A549 (cell line): ENCODE measurements at regions of chr10 and their contacts with region 1.

Region 1: DNA sequence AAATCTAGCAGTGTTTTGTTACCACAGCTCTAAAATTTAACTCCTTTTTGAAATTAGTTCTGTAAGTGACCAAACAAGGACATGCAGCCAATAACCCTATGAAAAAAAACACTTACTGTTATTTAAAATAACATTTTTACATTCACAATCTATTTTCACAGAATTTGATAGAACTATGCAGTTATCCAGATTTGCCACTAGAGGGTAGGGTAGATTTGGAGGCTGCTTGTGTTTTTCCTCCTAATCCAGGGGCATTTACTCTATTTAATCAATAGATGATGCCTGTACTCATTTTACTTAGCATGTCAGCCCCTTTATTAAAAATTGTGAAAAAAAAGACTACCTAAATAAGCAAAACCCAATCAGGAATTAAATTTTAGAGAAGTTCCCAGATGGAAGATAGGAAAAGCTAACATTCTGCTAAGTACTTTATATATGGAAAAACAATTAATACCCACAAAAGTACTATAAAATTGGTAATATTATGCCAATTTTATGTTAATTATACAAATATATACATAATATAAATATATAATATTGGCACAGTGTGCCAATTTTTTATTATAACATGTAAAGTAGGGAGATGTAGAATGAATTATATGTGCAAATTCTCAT is 18.1 kb upstream of the LIPK start:
- DNase-seq: peak; percentile 27 to 36
- ATAC-seq: no peak
- H3K4me3 ChIP-seq: no peak overlapping the region
- H3K27ac ChIP-seq: peak overlapping the region in 1 of 2 experiments; percentile 37; a peak in 1 of 6 replicates
- H3K4me1 ChIP-seq: peaks cover 23% of the 10 kb centered on the region
- CTCF ChIP-seq: peak; percentile 86
- EP300 ChIP-seq: no peak
- POLR2A ChIP-seq: no peak
- RAD21 ChIP-seq: peak; percentile 79 to 82

Region 2: DNA sequence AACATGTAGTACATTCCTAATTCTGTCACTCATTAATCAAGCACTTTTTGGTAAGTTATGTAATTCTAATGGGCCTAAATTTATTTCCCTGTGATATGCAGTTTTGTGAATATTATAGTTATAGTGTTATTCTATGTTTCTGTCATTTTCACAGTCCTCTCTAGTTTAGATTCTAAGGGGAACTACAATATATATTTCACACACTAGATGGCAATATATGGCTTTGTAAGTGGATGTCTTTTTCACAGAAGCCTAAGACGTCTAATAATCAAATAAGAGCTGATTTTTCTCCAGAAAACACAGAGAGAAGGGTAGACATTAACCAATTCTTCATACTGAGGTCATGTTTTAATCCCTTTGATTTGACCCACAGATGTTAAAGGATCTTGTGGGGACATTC is 122.9 kb before region 1 on chr10:
- CTCF ChIA-PET with region 1: interaction called, 16 read pairs
- POLR2A ChIA-PET with region 1: no interaction called
- DNase-seq: peak; percentile 15 to 39
- ATAC-seq: peak; percentile 81 to 89
- H3K4me3 ChIP-seq: no peak overlapping the region
- H3K27ac ChIP-seq: no peak overlapping the region
- H3K4me1 ChIP-seq: peaks cover 10% of the 10 kb centered on the region; the same call in 2 of the 3 replicates
- CTCF ChIP-seq: peak; percentile 64
- EP300 ChIP-seq: no peak
- POLR2A ChIP-seq: no peak
- RAD21 ChIP-seq: peak; percentile 82 to 85

Region 3: DNA sequence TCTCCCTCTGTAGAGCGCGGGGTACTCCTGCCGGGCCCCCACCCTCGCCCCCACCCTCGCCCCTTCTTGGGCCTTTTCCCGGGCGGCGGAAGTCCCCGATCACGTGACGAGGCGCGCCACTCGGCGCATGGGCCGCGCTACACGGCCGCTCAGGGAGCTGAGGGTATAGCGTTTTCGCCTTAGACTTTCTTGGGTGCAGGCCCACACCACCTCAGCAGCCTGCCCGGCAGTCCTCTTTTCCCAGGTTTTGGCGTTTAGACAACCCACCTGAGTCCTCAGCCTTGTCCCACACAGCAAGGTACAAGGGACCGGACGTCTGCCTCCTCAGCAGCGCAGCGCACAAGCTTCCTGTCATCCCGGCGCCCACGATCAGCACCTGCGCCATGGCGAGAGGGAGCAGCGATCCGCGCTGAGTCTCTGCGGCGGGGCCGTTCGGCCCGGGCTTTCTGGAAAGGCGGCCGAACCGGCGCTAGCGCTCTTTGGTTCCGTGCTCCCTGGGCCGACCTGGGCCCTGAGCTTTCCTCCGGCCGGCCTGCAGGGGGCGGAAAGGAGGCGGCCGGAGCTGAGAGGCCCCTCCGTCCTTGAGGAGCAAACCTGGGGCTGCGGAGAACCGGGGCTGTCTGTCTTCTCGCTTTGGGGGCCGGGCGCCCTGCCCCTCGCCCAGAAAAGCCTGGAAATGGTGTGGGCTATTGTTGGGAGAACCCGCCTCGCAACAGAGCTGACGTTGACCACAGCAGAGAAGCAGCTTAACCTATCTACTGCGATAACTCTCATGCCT is 105.0 kb before region 1 on chr10 and contains the start of gene RNLS:
- CTCF ChIA-PET with region 1: interaction called, 13 read pairs
- POLR2A ChIA-PET with region 1: interaction called, 4 read pairs
- DNase-seq: peak; percentile 21 to 74
- ATAC-seq: peak; percentile 94 to 96
- H3K4me3 ChIP-seq: peak within 1 kb of the TSS; percentile 67
- H3K27ac ChIP-seq: peak within 1 kb of the TSS; percentile 90 to 93
- H3K4me1 ChIP-seq: no peaks in the 10 kb centered on the region
- CTCF ChIP-seq: peak; percentile 61
- EP300 ChIP-seq: no peak
- POLR2A ChIP-seq: peak; percentile 62
- RAD21 ChIP-seq: peak; percentile 26 to 54; a peak in 4 of 5 replicates
- polyA plus RNA-seq, gene RNLS: 16.8 and 20.0 TPM in 2 replicates

Region 4: DNA sequence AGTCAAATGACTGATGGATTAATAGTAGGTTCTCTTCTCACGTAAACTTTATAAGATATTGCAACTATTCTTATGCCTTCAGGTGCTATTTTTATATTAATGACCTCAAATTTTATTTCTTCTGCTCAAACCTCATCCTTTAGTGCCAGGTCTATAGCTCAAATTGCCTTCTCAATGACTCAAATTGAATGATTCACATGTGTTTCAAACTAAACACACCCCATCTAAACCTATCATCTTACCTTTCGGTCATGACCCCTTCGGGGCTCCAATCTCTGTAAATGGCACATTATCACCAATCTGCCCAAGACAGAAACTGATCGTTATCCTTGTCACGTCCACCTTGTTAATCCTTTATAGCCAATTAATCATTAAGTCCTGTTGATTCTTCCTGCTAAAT is 45.7 kb before region 1 on chr10:
- CTCF ChIA-PET with region 1: no interaction called
- POLR2A ChIA-PET with region 1: no interaction called
- DNase-seq: no peak
- ATAC-seq: no peak
- H3K4me3 ChIP-seq: no peak overlapping the region
- H3K27ac ChIP-seq: peak overlapping the region in 1 of 2 experiments; percentile 46; a peak in 2 of 6 replicates
- H3K4me1 ChIP-seq: peaks cover 13% of the 10 kb centered on the region
- CTCF ChIP-seq: no peak
- EP300 ChIP-seq: no peak
- POLR2A ChIP-seq: no peak
- RAD21 ChIP-seq: no peak

Region 5: DNA sequence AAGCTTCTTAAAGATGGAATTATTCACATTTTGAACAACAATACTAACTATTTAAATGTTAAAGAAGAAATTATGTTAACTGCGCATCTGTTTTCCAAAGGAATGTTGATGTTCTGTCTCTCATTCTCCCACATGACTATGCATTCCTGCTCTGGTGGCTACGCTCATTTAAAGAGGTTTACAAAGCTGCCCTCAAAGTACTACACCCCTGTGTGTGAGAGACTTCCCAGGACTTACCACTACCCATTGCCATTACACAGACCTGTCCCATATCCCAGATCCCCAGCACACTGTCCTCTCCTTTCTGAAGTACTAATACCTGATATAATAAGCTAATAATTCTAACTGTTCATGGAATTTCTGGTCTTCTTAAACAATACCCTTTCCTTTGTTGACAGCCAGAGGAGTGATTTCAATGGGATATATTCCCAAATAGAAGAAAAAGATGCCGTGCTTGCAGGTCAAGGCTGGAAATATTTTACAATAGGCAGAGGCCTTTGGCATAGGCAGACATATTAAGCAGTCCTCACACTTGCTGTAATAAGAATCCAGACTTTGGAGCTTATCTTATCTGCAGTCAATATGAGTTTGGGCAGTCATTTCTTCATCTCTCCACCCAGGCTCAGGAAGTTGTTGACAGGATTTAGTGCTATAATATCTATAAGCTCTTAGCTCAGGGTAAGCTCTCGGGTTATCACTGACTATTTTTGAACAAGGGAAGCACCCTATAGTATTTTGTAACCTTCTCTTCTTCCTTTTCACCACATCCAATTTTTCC is 11.5 kb before region 1 on chr10:
- CTCF ChIA-PET with region 1: interaction called, 18 read pairs
- POLR2A ChIA-PET with region 1: no interaction called
- DNase-seq: no peak
- ATAC-seq: no peak
- H3K4me3 ChIP-seq: no peak overlapping the region
- H3K27ac ChIP-seq: no peak overlapping the region
- H3K4me1 ChIP-seq: no peaks in the 10 kb centered on the region
- CTCF ChIP-seq: no peak
- EP300 ChIP-seq: no peak
- POLR2A ChIP-seq: no peak
- RAD21 ChIP-seq: no peak

Region 6: DNA sequence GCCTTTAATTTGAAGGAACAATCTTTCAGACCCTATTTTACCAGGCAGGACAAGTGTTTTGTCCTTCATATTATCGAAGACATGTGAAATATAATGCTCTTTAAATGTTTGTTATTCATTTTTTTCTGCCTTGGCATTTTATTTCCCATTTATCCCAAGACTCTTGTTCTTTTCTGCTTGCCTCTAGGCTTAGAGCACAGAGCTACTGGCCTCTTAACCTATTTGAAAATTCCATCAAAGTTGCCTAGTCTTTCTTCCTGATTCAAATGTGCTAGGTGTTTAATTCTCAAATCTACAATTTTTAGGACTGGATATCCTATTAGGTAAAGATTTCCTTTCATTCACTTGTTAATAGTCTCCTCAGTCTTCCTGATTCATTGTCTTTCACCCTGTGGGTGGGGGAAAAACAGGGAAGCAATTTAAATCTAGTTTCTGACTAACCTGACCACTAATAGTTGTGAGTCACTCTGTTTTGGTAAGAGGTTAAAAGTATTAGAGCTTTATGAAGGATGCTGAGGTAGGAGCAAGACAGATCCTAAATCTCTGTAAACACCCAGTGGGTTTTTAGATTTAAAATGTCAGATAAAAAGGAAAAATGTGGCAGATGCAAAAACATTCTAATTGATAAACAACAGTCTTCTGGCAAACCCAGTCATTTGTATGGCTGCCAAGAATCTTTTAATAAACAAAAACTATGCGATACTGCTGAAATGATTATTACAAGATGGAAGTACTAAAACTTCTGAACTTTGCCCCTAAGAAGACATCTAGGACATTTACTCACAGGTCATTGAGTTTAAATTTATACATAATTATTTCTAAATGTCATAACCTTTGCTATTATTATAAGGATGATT is 19.7 kb after region 1 on chr10:
- CTCF ChIA-PET with region 1: interaction called, 14 read pairs
- POLR2A ChIA-PET with region 1: no interaction called
- DNase-seq: peak in 1 of 2 experiments; percentile 51
- ATAC-seq: peak; percentile 60 to 76; a peak in 4 of 6 replicates
- H3K4me3 ChIP-seq: no peak overlapping the region
- H3K27ac ChIP-seq: peak overlapping the region; percentile 43 to 65; a peak in 5 of 6 replicates
- H3K4me1 ChIP-seq: peaks cover 42% of the 10 kb centered on the region
- CTCF ChIP-seq: no peak
- EP300 ChIP-seq: no peak
- POLR2A ChIP-seq: no peak
- RAD21 ChIP-seq: no peak